ENCODE measurements at regions of chr19 and their contacts with region 1.

Region 1: GRCh38 chr19:11090054-11090900 is 1.0 kb downstream of the LDLR start:
- DNase-seq: peak; percentile 94 to 98 (median 97)
- H3K4me3 ChIP-seq: peak overlapping the region; percentile 66 to 95 (median 87)
- H3K27ac ChIP-seq: peak overlapping the region; percentile 93
- H3K4me1 ChIP-seq: peaks cover 30 to 64% (median 53%) of the 10 kb centered on the region in 4 experiments
- H3K27me3 ChIP-seq: no peaks in the 10 kb centered on the region

Region 2: DNA sequence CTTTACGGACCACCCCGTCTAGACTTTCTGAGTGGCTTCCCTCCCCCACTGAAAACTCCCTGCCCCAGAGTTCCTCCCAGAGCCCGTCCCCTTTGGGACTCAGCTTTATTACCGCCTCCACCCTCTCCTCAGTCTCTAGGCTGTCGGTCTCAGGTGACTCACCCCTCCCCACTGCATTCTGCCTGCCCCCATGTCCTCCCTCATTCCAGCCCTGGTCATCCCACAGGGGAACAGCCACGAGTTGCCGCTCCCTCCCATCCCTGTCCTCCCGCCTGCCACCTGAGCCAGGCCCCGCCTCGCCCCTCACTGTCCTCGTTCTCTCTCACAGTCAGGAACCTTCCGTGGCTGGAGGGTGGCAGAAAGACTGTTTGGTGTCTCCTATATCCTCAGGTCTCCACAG is 72.1 kb before region 1 on chr19:
- CTCF ChIA-PET with region 1: no interaction called
- POLR2A ChIA-PET with region 1: no interaction called
- DNase-seq: no peak
- H3K4me3 ChIP-seq: no peak overlapping the region
- H3K27ac ChIP-seq: no peak overlapping the region
- H3K4me1 ChIP-seq: no peaks in the 10 kb centered on the region
- H3K27me3 ChIP-seq: no peaks in the 10 kb centered on the region

Region 3: DNA sequence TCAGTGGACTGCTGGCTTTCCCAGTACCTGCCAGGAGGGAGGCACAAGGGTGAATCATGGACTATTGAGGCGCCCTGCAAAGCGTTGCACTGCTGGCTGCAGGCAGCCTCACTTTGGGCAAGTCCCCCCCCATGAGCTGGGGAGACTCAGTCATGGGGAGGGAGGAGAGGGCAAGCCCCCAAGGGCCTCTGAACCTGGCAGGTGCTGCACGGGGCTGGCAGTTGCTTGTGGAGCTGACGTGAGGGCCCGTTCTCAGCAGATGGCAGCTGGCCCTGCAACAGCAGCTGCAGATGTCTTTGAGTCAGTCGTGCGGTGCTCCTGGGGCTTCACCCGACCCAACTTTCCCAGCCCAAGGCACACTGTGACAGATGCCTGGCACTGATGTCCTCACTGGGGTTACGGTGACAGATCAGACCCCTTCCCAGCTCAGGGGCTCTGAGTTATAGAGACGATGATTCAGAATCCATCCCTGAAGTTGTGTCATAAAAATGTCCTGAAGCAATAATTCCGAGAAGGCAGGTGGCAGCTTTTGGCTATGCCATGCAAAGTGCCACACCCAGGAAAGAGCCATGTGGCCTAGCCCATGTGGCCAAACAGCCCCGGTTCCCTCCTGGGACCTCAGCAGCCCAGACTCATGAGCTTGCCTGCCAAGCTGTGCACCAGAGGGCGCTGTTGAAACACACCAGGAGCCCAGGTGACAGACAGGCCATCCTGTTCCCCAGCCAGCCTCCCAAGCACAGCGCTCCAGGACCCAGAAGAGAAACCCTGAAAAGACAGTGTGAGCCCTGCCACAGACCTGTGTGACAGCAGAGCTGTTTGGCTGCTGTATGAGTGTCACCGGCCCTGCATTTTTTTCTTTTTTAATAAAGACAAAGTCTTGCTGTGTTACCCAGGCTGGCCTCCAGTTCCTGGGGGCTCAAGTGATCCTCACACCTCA is 54.6 kb before region 1 on chr19:
- CTCF ChIA-PET with region 1: interaction called, 21 read pairs
- POLR2A ChIA-PET with region 1: no interaction called
- DNase-seq: peak; percentile 87 to 91 (median 88)
- H3K4me3 ChIP-seq: no peak overlapping the region
- H3K27ac ChIP-seq: no peak overlapping the region
- H3K4me1 ChIP-seq: no peaks in the 10 kb centered on the region
- H3K27me3 ChIP-seq: no peaks in the 10 kb centered on the region

Region 4: DNA sequence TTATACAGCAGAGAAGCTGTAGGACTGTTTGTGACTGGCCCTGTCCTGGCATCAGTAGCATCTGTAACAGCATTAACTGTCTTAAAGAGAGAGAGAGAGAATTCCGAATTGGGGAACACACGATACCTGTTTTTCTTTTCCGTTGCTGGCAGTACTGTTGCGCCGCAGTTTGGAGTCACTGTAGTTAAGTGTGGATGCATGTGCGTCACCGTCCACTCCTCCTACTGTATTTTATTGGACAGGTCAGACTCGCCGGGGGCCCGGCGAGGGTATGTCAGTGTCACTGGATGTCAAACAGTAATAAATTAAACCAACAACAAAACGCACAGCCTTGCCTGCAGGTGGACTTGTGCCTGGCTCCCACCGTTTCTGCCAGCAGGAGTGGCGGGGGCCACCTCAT is 28.3 kb before region 1 on chr19:
- CTCF ChIA-PET with region 1: no interaction called
- POLR2A ChIA-PET with region 1: no interaction called
- DNase-seq: no peak
- H3K4me3 ChIP-seq: no peak overlapping the region
- H3K27ac ChIP-seq: no peak overlapping the region
- H3K4me1 ChIP-seq: peaks cover 0 to 4% (median 2%) of the 10 kb centered on the region in 4 experiments
- H3K27me3 ChIP-seq: no peaks in the 10 kb centered on the region

Region 5: DNA sequence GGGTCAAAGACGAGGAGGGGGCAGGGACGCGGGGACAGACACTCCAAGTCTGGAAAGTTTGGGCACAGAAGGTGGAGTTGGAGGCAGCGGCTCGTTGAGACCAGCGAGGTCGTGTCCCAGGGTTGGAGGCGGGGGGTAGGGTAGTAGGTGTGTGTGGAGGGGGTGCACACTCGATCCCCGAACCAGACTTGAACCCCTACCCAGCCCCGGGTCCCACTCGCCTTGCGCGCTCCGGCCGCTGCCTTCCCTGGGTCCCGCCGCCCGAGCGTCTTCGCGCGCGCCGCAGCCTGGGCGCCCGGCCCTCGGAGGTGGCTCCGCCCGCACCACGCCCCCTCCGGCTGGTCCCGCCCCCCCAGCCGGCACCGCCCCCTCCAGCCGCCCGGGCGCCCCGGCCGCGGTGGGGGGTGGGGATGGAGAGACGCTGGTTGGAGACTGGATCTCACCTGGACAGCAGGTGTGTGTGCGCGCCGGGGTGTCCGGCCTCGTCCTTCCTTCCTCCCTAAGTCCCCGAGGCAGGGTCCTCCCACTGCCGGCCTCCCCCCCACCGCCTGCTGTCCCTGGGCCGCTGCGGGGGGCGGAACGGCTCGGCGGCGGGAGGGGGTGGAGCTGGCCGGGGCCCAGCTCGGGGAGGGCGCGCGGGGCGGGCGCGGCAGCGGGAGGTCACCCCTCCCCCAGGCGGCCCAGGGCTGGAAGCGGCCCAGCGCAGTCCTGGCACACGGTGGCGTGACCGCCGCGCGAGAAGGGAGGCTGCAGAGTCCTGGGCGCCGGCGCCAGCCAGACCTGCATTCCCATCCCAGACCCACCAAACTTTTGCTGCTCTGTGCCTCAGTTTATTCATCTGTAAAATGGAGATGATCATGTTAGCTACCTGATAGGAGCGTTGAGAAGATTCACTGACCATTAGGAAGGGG is 107.2 kb after region 1 on chr19 and contains the start of gene KANK2:
- CTCF ChIA-PET with region 1: no interaction called
- POLR2A ChIA-PET with region 1: no interaction called
- DNase-seq: peak; percentile 65 to 79 (median 71)
- H3K4me3 ChIP-seq: peak within 1 kb of the TSS; percentile 42 to 87 (median 72)
- H3K27ac ChIP-seq: peak within 1 kb of the TSS in 1 of 2 experiments; percentile 34
- H3K4me1 ChIP-seq: peaks cover 0 to 37% (median 26%) of the 10 kb centered on the region in 4 experiments
- H3K27me3 ChIP-seq: no peaks in the 10 kb centered on the region